Breast epithelium (tissue), 4 donors: ENCODE measurements at regions of chr14 and their contacts with region 1.

Region 1: DNA sequence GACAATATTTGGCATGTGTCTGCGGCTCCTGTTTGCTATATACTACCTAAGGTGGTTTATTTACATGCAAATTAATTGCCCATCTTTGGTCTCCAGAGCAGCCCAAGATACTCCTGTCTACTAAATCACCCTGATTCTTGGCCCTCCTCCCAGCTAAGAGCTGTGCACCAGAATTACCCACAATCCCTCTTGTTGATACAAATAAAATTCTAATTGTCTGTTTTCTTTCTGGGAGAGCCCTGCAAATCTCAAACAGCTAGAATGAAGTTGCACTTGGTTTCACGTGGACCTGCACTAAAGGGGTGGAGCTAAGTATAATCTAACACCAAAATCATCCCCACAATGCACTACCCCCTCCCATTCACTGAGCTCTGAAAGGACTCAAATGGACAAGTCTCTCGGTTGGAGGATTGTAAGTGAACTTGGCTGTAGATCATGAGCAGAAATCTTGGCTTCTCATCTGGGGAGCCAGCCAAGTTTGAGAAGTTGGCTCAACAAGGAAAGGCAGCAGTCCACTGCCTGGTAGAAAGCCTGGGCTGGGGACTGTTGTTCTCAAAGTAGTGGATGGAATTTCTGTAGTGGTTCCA is 6.6 kb downstream of the MAX start:
- DNase-seq: peak; percentile 56 to 67
- H3K4me3 ChIP-seq: no peak overlapping the region
- H3K27ac ChIP-seq: peak overlapping the region; percentile 66 to 68
- H3K4me1 ChIP-seq: peaks cover 4 to 36% of the 10 kb centered on the region in 2 donors
- H3K27me3 ChIP-seq: no peaks in the 10 kb centered on the region
- CTCF ChIP-seq: no peak
- POLR2A ChIP-seq: no peak

Region 2: GRCh38 chr14:65069874-65070423 is 25.8 kb before region 1 on chr14:
- intact Hi-C with region 1: loop called (anchors 1 kb)
- DNase-seq: no peak
- H3K4me3 ChIP-seq: no peak overlapping the region
- H3K27ac ChIP-seq: no peak overlapping the region
- H3K4me1 ChIP-seq: peaks cover 0 to 5% of the 10 kb centered on the region in 2 donors
- H3K27me3 ChIP-seq: no peaks in the 10 kb centered on the region
- CTCF ChIP-seq: no peak
- POLR2A ChIP-seq: no peak

Region 3: GRCh38 chr14:65080960-65081747 is 14.6 kb before region 1 on chr14:
- intact Hi-C with region 1: no loop called
- DNase-seq: no peak
- H3K4me3 ChIP-seq: no peak overlapping the region
- H3K27ac ChIP-seq: no peak overlapping the region
- H3K4me1 ChIP-seq: no peaks in the 10 kb centered on the region
- H3K27me3 ChIP-seq: no peaks in the 10 kb centered on the region
- CTCF ChIP-seq: no peak
- POLR2A ChIP-seq: no peak

Region 4: GRCh38 chr14:65604936-65605335 is 509.2 kb after region 1 on chr14:
- intact Hi-C with region 1: no loop called
- DNase-seq: no peak
- H3K4me3 ChIP-seq: no peak overlapping the region
- H3K27ac ChIP-seq: no peak overlapping the region
- H3K4me1 ChIP-seq: no peaks in the 10 kb centered on the region
- H3K27me3 ChIP-seq: no peaks in the 10 kb centered on the region
- CTCF ChIP-seq: no peak
- POLR2A ChIP-seq: no peak